Endothelial cell of umbilical vein (primary cell): ENCODE measurements at regions of chr17 and their contacts with region 1.

Region 1: DNA sequence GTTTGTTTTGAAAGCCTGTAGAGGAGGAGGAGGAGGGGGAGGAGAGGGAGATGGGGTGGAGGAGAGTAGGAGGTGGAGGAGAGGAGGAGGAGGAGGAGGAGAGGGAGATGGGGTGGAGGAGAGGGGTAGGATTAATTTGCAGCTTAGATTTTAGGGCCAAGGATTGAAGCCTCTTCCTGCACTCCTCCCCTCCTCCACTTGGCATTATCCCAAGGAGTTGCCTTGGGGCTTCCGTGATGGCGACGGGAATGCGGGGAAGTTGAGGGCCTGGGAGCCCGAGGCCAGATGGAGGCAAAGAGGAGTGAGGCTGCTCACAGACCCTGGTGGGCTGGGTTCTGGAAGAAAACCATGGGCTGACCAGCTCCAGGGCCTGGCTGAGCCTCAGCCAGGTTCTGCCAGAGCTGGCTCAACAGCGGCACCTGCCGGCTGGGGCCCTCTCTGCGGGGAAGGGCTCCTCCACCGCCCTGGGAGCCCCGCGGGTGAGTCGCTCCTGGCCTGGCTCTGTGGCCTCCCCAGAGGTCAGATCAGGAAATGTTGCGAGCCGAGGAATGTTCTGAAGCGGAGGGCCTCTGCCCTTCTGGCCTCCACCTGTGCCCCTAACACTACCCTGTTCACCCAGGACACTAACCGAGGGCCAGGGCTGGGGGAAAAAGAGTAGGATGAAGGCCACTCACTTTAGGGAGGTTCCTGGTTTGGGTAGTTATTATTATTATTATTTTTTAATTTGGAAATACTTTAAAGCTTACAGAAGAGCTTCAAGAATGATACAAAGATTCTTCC is 23.9 kb upstream of the FMNL1 start:
- DNase-seq: peak; percentile 86
- H3K4me3 ChIP-seq: no peak overlapping the region
- H3K27ac ChIP-seq: no peak overlapping the region
- H3K4me1 ChIP-seq: peaks cover 2% of the 10 kb centered on the region
- H3K27me3 ChIP-seq: no peaks in the 10 kb centered on the region
- CTCF ChIP-seq: peak; percentile 99 to 100
- POLR2A ChIP-seq: no peak

Region 2: DNA sequence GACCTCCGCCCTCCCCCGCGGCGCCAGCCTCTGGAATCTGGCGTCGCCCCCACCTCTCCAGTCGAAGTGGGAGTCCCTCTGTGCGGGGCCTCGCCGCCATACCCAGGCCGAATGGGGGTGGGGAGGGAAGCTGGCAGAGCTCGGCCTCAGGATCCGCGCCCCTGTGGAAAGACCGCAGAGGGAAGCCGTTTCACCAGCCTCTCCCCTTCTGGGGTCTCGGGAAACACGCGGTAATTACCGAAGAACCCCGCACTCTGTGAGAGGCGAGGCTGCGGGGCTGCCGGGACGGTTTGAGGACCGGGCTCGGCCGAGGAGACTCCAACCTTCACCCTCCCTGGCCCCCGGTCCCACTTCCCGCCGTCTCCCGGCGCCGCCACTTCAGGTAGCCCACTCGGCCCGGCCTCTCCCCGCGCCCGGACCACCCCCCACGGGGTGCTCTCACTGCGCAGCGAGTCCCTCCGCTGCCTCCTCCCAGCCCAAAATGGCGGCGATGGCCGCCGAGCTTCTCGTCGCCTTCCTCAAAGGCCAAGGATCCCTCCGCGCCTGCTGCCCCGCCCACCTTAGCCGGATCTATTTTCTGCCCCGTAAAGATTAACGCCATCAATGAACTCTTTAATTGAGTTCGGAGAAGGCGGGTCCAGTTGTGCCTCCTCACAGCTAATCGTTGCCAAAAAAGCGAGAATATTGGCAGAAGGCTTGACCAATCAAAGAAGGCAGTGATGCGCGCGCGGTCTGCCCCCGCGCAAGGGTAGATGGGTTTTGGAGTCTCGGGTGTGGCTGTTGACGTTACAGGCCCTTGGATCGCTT is 36.5 kb before region 1 on chr17:
- CTCF ChIA-PET with region 1: interaction called, 24 read pairs
- POLR2A ChIA-PET with region 1: interaction called, 6 read pairs
- dilution Hi-C with region 1: no loop called
- intact Hi-C with region 1: no loop called
- DNase-seq: peak; percentile 100
- H3K4me3 ChIP-seq: peak overlapping the region; percentile 60 to 92 (median 80)
- H3K27ac ChIP-seq: peak overlapping the region; percentile 91
- H3K4me1 ChIP-seq: peaks cover 28% of the 10 kb centered on the region
- H3K27me3 ChIP-seq: no peaks in the 10 kb centered on the region
- CTCF ChIP-seq: no peak
- POLR2A ChIP-seq: peak; percentile 94

Region 3: DNA sequence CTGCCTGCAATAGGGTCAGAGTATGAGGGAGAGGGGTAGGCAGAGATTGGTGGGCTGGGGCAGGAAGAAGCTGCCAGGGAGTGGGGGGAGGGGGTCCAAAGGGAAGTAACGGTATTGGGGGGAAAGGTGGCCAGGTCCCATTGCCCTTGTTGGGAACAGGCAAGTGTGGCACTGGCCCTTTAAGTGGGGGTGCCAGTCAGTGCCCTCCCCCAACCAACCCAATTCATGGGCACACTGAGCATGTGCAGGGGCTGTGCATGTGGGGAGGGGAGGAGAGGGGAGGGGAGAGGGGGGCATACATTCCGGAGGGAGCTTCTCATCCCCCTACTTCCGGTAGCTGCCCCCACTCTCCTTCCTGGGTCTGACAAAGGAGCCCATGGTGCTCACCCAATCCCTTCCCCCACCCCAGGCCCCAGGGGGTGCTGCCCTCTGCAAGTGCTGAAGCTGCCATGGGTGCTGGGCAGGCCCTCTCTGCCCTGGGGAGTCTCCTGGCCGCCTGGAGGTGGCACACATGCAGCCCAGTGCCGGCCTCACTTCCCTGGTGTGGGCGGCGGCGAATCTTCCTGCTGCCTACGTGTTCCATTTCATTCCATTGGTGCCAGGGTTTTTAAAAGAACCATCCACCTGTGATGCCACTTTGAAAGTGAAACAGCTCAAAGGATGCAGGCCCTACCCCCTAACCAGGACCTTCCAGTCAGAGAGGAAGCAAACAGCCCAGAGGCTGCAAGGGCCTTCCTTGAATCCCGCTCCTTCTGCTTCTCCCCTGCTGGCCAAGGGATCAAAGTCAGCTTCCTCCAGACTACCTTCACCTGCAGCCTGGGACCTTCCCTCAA is 25.1 kb before region 1 on chr17:
- CTCF ChIA-PET with region 1: interaction called, 10 read pairs
- POLR2A ChIA-PET with region 1: no interaction called
- dilution Hi-C with region 1: no loop called
- intact Hi-C with region 1: no loop called
- DNase-seq: no peak
- H3K4me3 ChIP-seq: no peak overlapping the region
- H3K27ac ChIP-seq: no peak overlapping the region
- H3K4me1 ChIP-seq: peaks cover 14% of the 10 kb centered on the region
- H3K27me3 ChIP-seq: no peaks in the 10 kb centered on the region
- CTCF ChIP-seq: no peak
- POLR2A ChIP-seq: no peak